Aorta (tissue), 5 donors: ENCODE measurements at regions of chr9 and their contacts with region 1.

Region 1: GRCh38 chr9:35690431-35691333 is 957 bp upstream of the TPM2 start:
- DNase-seq: peak; percentile 92 to 98
- ATAC-seq: peak; percentile 79
- H3K4me3 ChIP-seq: peak overlapping the region; percentile 44 to 95
- H3K27ac ChIP-seq: peak overlapping the region; percentile 76 to 100
- H3K4me1 ChIP-seq: no peaks in the 10 kb centered on the region
- H3K27me3 ChIP-seq: no peaks in the 10 kb centered on the region

Region 2: DNA sequence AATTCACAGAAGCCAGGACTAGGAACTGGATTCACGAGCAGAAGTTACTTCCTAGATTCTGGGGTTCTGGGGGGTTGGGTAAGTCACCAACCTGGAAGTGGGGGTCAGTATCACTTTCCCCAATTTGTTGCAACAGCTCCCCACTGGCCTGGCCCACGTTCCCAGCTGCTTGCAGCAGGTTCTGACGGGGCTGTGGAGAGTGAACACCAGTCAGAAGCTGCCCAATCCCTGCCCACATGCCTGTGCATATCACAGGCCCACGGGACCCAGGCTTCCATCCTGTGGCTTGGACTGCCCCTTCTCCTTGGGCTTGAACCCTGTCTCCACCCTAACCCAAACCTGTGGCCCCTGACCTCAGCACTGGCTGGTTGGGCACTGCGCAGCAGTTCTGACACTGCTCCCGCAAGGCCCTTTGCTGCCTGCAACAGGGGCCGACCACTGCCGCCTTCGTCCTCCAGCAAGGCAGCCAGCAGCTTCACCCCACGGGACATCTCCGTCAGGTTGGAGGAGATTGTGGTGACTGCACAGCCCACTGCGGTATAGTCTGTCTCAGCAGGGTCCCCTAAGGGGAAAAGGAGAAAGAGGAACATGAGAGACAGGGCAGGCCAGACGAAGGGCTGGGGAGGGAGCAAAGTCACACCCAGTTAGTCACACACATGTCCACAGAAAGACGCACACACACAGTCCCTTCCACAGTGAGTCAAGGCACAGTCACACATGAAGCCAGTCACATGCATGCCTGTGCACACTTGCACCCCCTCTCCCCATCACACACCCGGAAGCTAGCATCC is 28.2 kb after region 1 on chr9:
- intact Hi-C with region 1: no loop called
- DNase-seq: peak in 1 of 2 donors; percentile 24
- ATAC-seq: no peak
- H3K4me3 ChIP-seq: no peak overlapping the region
- H3K27ac ChIP-seq: no peak overlapping the region
- H3K4me1 ChIP-seq: no peaks in the 10 kb centered on the region
- H3K27me3 ChIP-seq: no peaks in the 10 kb centered on the region

Region 3: GRCh38 chr9:35732122-35732799 is 41.6 kb after region 1 on chr9 and contains the starts of genes CREB3 and TLN1:
- intact Hi-C with region 1: loop called (anchors 2 kb)
- DNase-seq: peak; percentile 99 to 100
- ATAC-seq: peak; percentile 94
- H3K4me3 ChIP-seq: peak within 1 kb of the TSS; percentile 65 to 97
- H3K27ac ChIP-seq: peak within 1 kb of the TSS; percentile 94 to 98
- H3K4me1 ChIP-seq: no peaks in the 10 kb centered on the region
- H3K27me3 ChIP-seq: no peaks in the 10 kb centered on the region
- total RNA-seq, gene CREB3: 39.5 to 51.3 TPM
- total RNA-seq, gene TLN1: 735 to 1,271 TPM

Region 4: DNA sequence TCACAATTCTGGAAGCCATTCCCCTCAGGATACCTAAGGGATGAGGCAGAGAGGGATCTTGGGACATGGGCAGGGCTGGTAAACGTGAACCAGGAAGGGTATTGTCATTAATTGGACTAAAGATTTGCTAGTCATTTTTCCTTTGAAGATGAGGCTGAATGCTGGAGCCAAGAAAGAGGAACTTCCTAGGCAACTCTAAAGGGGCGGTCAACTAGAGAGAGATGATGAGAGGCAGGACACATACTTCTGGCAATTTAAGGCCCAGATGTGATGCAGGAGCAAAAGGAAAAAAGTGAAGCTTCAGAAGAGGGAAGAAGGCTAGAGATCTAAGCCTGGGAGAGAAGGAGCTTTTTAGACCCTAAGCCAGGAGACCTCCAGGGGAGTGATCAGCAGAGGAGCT is 52.8 kb after region 1 on chr9:
- intact Hi-C with region 1: no loop called
- DNase-seq: no peak
- ATAC-seq: no peak
- H3K4me3 ChIP-seq: no peak overlapping the region
- H3K27ac ChIP-seq: no peak overlapping the region
- H3K4me1 ChIP-seq: no peaks in the 10 kb centered on the region
- H3K27me3 ChIP-seq: no peaks in the 10 kb centered on the region

Region 5: DNA sequence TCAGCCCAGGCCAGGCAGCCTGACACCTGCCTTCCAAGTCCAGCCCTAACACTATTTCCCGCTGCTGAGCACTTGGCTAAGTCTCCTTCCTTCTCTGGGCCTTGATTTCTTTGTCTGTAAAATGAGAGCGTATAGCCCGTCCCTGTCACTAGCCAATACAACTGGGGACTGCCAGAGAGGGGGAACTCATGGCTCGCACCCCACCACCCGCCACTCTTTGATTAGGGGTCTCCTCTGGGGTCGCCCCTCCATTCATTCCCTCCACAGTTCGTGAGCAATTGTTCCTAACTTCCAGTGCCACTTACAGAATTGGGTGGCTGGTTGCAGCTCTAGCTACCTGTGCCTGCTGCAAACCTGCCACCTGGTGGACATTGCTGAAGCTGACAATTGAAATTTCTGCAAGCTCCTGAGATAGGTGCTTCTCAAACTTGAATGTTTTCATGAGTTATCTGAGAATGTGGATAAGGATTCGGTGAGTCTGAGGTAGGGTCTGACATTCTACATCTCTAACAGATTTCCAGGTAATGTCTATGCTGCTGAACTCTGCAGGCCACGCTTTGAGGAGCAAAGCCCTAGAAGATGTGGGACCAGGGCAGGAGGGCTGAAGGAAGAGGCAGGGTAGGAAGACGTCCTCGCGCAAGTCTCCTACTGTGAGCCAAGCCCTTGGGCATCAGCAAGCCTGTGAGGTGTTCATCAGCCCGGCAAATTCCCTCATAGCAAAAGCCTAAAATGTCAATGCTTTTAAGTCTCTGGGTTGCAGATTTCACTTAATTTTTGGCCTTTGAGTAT is 332.8 kb after region 1 on chr9:
- intact Hi-C with region 1: no loop called
- DNase-seq: peak; percentile 72 to 78
- ATAC-seq: peak; percentile 71
- H3K4me3 ChIP-seq: no peak overlapping the region
- H3K27ac ChIP-seq: no peak overlapping the region
- H3K4me1 ChIP-seq: no peaks in the 10 kb centered on the region
- H3K27me3 ChIP-seq: no peaks in the 10 kb centered on the region